H1 (cell line): ENCODE measurements at regions of chr5 and their contacts with region 1.

Region 1: GRCh38 chr5:37554938-37555337 is 175.8 kb downstream of the WDR70 start:
- DNase-seq: no peak
- H3K4me3 ChIP-seq: no peak overlapping the region
- H3K27ac ChIP-seq: no peak overlapping the region
- H3K4me1 ChIP-seq: no peaks in the 10 kb centered on the region
- H3K27me3 ChIP-seq: no peaks in the 10 kb centered on the region
- CTCF ChIP-seq: peak in 2 of 3 experiments; percentile 51 to 65; a peak in 2 of 4 replicates
- EP300 ChIP-seq: no peak
- POLR2A ChIP-seq: no peak
- RAD21 ChIP-seq: peak; percentile 51 to 59

Region 2: GRCh38 chr5:37412515-37413277 is 142.2 kb before region 1 on chr5:
- CTCF ChIA-PET with region 1: interaction called, 28 read pairs
- POLR2A ChIA-PET with region 1: no interaction called
- DNase-seq: peak in 1 of 2 experiments; percentile 23
- H3K4me3 ChIP-seq: no peak overlapping the region
- H3K27ac ChIP-seq: no peak overlapping the region
- H3K4me1 ChIP-seq: no peaks in the 10 kb centered on the region
- H3K27me3 ChIP-seq: no peaks in the 10 kb centered on the region
- CTCF ChIP-seq: peak in 2 of 3 experiments; percentile 91 to 98; a peak in 3 of 4 replicates
- EP300 ChIP-seq: no peak
- POLR2A ChIP-seq: no peak
- RAD21 ChIP-seq: peak; percentile 92 to 93

Region 3: GRCh38 chr5:37428044-37428443 is 126.9 kb before region 1 on chr5:
- CTCF ChIA-PET with region 1: no interaction called
- POLR2A ChIA-PET with region 1: no interaction called
- DNase-seq: no peak
- H3K4me3 ChIP-seq: no peak overlapping the region
- H3K27ac ChIP-seq: no peak overlapping the region
- H3K4me1 ChIP-seq: no peaks in the 10 kb centered on the region
- H3K27me3 ChIP-seq: no peaks in the 10 kb centered on the region
- CTCF ChIP-seq: no peak
- EP300 ChIP-seq: no peak
- POLR2A ChIP-seq: no peak
- RAD21 ChIP-seq: no peak

Region 4: DNA sequence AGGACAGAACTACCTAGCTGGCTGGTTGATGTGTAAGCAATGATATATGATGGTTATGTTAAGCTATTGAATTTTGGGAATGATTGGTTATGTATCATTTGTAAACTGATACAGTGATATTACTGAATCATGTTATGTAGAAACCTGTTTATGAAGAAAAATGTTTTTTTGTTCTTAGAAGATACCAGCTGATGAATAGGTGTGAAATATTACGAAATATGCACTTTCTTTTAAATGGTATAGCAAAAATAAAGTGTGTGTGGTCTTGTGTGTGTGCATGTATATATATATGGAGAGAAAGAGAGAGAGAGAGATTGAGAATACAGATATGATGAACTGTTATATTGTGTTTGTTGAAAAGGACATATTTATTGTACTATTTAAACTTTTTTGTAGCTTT is 11.7 kb before region 1 on chr5:
- CTCF ChIA-PET with region 1: interaction called, 43 read pairs
- POLR2A ChIA-PET with region 1: interaction called, 3 read pairs
- DNase-seq: no peak
- H3K4me3 ChIP-seq: no peak overlapping the region
- H3K27ac ChIP-seq: no peak overlapping the region
- H3K4me1 ChIP-seq: no peaks in the 10 kb centered on the region
- H3K27me3 ChIP-seq: no peaks in the 10 kb centered on the region
- CTCF ChIP-seq: no peak
- EP300 ChIP-seq: no peak
- POLR2A ChIP-seq: no peak
- RAD21 ChIP-seq: no peak

Region 5: DNA sequence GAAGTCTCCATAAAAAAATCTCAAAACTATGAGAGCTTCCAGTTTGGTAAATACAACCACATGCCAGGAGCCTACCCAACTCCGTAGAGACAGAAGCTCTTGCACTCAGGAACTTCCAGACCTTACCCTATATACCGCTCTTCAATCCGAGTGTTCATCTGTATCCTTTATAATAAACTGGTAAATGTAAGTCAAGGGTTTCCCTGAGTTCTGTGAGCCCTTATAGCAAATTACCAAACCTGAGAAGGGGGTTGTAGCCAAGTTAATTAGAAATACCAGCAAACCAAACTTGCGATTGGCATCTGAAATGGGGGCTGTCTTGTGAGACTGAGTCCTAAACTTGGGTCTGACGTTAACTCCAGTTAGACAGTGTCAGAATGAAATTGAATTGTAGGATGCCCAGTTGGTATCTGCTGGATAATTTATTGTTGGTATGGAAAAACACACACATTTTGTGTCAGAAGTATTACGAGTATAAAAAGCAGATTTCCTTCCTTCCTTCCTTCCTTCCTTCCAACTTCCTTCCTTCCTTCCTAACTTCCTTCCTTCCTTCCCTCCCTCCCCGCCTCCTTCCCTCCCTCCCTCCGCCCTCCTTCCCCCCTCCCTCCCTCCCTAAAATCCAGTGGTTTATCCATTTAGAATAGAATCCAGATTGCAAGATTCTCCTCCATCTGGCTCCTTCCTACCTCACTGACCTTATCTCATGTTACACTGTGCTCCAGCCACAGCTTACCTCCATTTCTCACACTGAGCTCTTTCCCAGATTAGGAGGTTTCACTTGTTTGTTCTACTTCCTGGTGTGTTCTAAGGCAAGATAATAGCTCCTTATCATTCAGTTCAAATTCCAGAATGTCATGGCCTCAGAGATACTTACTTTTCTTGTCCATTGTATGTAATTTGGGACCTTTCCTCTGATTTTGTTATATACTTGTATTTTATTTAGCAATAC is 20.9 kb after region 1 on chr5:
- CTCF ChIA-PET with region 1: interaction called, 20 read pairs
- POLR2A ChIA-PET with region 1: no interaction called
- DNase-seq: no peak
- H3K4me3 ChIP-seq: no peak overlapping the region
- H3K27ac ChIP-seq: no peak overlapping the region
- H3K4me1 ChIP-seq: no peaks in the 10 kb centered on the region; a peak in 1 of 7 replicates
- H3K27me3 ChIP-seq: no peaks in the 10 kb centered on the region
- CTCF ChIP-seq: no peak
- EP300 ChIP-seq: no peak
- POLR2A ChIP-seq: no peak
- RAD21 ChIP-seq: no peak

Region 6: GRCh38 chr5:37604290-37604689 is 49.4 kb after region 1 on chr5:
- CTCF ChIA-PET with region 1: no interaction called
- POLR2A ChIA-PET with region 1: no interaction called
- DNase-seq: no peak
- H3K4me3 ChIP-seq: no peak overlapping the region
- H3K27ac ChIP-seq: no peak overlapping the region
- H3K4me1 ChIP-seq: no peaks in the 10 kb centered on the region
- H3K27me3 ChIP-seq: no peaks in the 10 kb centered on the region
- CTCF ChIP-seq: no peak
- EP300 ChIP-seq: no peak
- POLR2A ChIP-seq: no peak
- RAD21 ChIP-seq: no peak

Region 7: GRCh38 chr5:37615184-37615583 is 60.2 kb after region 1 on chr5:
- CTCF ChIA-PET with region 1: no interaction called
- POLR2A ChIA-PET with region 1: no interaction called
- DNase-seq: no peak
- H3K4me3 ChIP-seq: no peak overlapping the region
- H3K27ac ChIP-seq: no peak overlapping the region
- H3K4me1 ChIP-seq: no peaks in the 10 kb centered on the region
- H3K27me3 ChIP-seq: no peaks in the 10 kb centered on the region
- CTCF ChIP-seq: no peak
- EP300 ChIP-seq: no peak
- POLR2A ChIP-seq: no peak
- RAD21 ChIP-seq: no peak

Region 8: DNA sequence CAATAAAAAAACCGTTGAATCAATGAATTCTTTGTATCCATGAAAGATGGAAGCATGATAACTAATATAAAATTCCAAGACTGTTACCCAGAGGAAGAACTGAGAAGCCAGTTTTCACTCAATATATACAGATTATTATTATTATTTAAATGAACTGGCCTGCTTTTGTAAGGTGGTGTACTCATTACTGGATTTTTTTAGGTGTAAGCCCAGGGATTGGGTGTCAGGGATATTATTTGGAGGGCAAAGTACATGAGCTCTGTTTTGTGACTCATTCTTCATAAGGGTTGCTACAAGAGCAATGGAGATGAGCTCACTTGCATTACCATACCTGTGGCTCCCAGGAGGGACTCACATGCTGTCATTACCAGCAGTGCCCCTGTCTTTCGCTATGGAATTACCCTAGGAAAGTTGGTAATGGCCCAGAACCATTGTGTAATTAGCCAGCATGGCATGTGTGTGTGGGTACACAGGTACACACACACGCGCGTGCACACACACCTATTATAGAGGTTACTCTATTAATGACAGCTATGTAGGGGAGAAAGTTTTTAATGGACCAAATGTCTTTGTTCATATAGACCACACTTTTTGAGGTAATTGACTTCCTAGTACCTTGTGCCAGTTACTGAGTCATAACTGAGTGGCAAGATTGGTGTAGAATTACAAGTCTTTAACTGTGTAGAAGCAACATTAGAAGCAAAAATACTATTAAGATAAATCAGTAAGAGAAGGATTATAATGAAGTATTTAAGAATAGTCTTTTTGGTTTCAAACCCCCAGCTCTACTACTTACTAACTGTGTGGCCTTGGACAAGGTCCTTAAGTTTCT is 141.5 kb after region 1 on chr5:
- CTCF ChIA-PET with region 1: no interaction called
- POLR2A ChIA-PET with region 1: no interaction called
- DNase-seq: no peak
- H3K4me3 ChIP-seq: no peak overlapping the region
- H3K27ac ChIP-seq: no peak overlapping the region
- H3K4me1 ChIP-seq: peaks cover 0 to 5% (median 0%) of the 10 kb centered on the region in 4 experiments; a peak in 1 of 7 replicates
- H3K27me3 ChIP-seq: no peaks in the 10 kb centered on the region
- CTCF ChIP-seq: no peak
- EP300 ChIP-seq: no peak
- POLR2A ChIP-seq: no peak
- RAD21 ChIP-seq: 0 out of 4 replicates have a peak, but pooled peaks of 1 of the 2 experiments have one; percentile 8